ENCODE measurements at regions of chr12 and their contacts with region 1.

Region 1: GRCh38 chr12:123854918-123855317 is 92.8 kb downstream of the DNAH10 start:
- DNase-seq: no peak
- H3K4me3 ChIP-seq: no peak overlapping the region
- H3K27ac ChIP-seq: no peak overlapping the region
- H3K4me1 ChIP-seq: no peaks in the 10 kb centered on the region
- H3K27me3 ChIP-seq: no peaks in the 10 kb centered on the region
- CTCF ChIP-seq: no peak
- POLR2A ChIP-seq: no peak

Region 2: GRCh38 chr12:123813349-123813748 is 41.6 kb before region 1 on chr12:
- intact Hi-C with region 1: no loop called
- DNase-seq: no peak
- H3K4me3 ChIP-seq: no peak overlapping the region
- H3K27ac ChIP-seq: no peak overlapping the region
- H3K4me1 ChIP-seq: no peaks in the 10 kb centered on the region
- H3K27me3 ChIP-seq: no peaks in the 10 kb centered on the region
- CTCF ChIP-seq: no peak
- POLR2A ChIP-seq: no peak

Region 3: DNA sequence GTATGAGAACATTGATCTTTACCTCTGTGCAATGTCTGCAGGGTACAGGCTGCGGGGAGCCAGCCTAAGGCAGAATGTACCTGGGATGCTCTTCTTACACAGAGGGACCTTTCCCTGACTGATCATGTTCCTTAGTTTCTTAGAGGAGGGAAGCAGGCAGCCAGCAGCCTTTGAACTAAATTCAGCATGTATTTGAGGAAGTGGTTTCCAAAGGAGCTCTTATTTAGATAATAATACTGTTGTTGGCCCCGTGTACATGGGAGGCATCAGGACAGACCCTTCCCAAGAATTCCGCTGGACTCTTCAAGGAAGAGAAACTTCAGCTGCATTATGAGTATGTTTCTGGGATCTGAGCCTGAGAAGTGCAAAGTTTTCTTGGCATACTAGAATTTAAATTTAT is 18.9 kb after region 1 on chr12:
- intact Hi-C with region 1: loop called (anchors 1 kb)
- DNase-seq: no peak
- H3K4me3 ChIP-seq: no peak overlapping the region
- H3K27ac ChIP-seq: no peak overlapping the region
- H3K4me1 ChIP-seq: no peaks in the 10 kb centered on the region
- H3K27me3 ChIP-seq: no peaks in the 10 kb centered on the region
- CTCF ChIP-seq: no peak
- POLR2A ChIP-seq: no peak

Measured in vagina (tissue), 2 donors.